ENCODE measurements at regions of chr12 and their contacts with region 1.

Region 1: DNA sequence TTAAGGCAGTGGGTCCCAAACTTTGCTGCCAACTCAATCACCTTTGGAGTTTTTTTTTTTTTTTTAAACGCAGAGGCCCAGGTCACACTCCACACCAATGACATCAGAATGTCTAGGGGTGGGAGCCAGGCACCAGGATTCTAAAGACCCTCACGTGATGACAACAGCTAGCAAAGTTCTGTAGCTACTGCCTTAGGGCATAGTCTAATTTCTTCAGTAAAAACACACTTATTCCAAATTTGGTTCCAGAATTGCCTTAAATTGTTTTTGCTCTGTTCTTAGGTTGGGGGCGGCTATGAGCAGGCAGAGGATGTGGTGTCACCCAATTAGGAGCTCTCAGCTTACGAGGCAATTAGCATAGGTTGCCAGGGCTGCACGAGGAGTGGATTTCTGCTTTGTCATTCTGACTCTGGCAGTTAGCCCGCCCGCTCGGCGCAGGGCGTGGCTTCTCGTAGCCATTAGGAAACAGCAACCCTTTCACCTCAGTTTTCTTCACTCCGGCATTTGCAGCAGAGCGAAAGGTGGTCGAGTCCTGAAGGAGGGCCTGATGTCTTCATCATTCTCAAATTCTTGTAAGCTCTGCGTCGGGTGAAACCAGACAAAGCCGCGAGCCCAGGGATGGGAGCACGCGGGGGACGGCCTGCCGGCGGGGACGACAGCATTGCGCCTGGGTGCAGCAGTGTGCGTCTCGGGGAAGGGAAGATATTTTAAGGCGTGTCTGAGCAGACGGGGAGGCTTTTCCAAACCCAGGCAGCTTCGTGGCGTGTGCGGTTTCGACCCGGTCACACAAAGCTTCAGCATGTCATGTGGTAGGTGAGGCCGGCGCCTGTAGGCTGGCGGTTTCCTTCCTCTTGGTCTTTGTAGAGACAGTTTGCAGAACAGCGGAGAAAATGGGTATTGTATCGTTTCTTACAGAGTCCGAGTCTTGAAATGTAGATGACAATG is 16.7 kb upstream of the EID3 start:
- DNase-seq: peak; percentile 76
- ATAC-seq: peak; percentile 86
- H3K4me3 Mint-ChIP-seq: peak overlapping the region; percentile 100
- H3K27ac Mint-ChIP-seq: peak overlapping the region; percentile 99
- H3K4me1 Mint-ChIP-seq: peaks cover 40% of the 10 kb centered on the region
- H3K27me3 Mint-ChIP-seq: peaks cover 2% of the 10 kb centered on the region
- CTCF ChIP-seq: no peak

Region 2: DNA sequence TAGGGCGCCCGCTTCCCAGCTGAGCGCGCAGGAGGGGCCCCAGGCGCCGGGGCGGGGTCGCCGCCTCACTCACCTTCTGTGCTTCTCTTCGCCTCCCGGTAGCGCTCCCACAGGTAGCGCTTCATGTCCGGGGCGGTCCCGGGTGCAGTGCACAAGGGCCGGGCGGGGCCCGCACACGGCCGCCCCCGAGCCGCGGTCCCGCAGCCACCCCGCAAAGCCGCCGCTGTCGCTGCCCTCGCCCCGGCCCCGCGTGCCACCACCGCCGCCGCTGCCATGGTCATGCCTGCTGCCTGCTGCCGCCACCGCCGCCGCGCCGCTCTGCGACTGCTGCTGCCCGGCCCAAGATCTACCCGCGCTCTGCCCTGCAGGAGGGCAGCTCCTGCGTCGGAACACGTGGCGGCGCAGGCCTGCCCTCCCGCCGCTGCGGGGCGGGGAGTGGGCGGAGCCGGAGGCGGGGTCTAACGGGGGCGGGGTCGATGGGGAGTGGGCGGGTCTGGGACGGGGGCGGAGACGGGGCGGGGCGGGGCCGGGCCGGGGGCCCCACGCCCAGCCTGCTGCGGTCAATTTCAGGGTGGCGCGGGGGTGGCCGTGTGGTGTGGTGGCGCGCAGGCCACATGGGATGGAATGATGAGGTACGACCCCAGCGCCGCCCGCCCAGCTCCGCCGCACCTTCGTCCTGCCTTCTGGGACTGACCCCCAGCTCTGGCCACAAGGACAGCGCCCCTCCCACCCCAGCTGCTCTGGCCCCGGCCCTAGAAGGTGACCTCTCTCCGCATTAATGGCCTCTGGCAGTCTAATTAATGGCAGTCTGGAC is 445.7 kb before region 1 on chr12 and contains the start of gene NT5DC3:
- CTCF ChIA-PET with region 1: no interaction called
- POLR2A ChIA-PET with region 1: no interaction called
- intact Hi-C with region 1: loop called (anchors 1 kb)
- DNase-seq: peak; percentile 83
- ATAC-seq: peak; percentile 91
- H3K4me3 Mint-ChIP-seq: peak within 1 kb of the TSS; percentile 89
- H3K27ac Mint-ChIP-seq: peak within 1 kb of the TSS; percentile 84
- H3K4me1 Mint-ChIP-seq: peaks cover 32% of the 10 kb centered on the region
- H3K27me3 Mint-ChIP-seq: no peaks in the 10 kb centered on the region
- CTCF ChIP-seq: no peak
- total RNA-seq, gene NT5DC3: 11.6 and 12.4 TPM in 2 replicates

Region 3: GRCh38 chr12:104215638-104216297 is 71.0 kb before region 1 on chr12 and contains the start of gene TXNRD1:
- CTCF ChIA-PET with region 1: interaction called, 17 read pairs
- POLR2A ChIA-PET with region 1: interaction called, 51 read pairs
- intact Hi-C with region 1: loop called (anchors 1 kb)
- DNase-seq: peak; percentile 82
- ATAC-seq: peak; percentile 93
- H3K4me3 Mint-ChIP-seq: peak within 1 kb of the TSS; percentile 79
- H3K27ac Mint-ChIP-seq: peak within 1 kb of the TSS; percentile 65
- H3K4me1 Mint-ChIP-seq: peaks cover 21% of the 10 kb centered on the region
- H3K27me3 Mint-ChIP-seq: peaks cover 6% of the 10 kb centered on the region
- CTCF ChIP-seq: no peak
- total RNA-seq, gene TXNRD1: 72.0 and 77.3 TPM in 2 replicates

Region 4: DNA sequence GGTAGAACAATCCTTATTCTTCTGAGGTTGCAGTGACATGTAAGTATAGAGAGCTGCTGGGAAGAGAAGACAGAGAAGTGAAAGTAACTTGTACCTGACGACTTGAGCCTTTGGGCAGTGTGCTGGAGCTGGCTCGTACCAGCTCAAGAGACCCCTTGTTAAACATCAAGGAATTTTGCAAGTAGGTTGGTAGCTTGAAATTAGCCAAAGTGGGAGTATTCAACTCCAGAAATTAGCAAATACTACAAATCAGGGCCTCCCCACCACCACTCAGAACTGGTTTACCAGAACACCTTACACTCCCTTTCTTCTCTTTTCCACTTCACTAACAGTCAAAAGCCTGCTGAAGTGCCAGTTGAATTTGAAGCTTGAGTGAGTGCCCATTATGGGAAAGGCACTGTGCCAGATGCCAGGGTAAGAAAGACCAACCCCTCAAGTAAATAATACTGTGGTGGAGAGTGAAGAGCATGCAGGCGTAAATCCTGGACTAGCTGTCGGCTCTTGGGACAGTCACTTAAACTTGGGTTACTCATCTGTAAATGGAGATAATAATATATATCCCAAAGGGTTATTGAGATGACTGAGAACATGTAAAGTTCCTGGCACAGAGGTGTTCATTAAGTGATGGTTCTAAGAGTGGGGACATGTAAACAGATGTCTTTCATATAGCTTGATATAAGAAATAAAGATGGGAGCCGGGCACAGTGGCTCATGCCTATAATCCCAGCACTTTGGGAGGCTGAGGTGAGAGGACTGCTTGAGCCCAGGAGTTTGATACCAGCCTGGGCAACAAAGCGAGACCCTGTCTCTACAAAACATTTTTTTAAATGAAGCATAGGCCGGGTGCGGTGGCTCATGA is 10.3 kb before region 1 on chr12:
- CTCF ChIA-PET with region 1: interaction called, 6 read pairs
- POLR2A ChIA-PET with region 1: interaction called, 43 read pairs
- intact Hi-C with region 1: loop called (anchors 1 kb)
- DNase-seq: no peak
- ATAC-seq: peak; percentile 79
- H3K4me3 Mint-ChIP-seq: peak overlapping the region; percentile 85
- H3K27ac Mint-ChIP-seq: peak overlapping the region; percentile 70
- H3K4me1 Mint-ChIP-seq: peaks cover 13% of the 10 kb centered on the region
- H3K27me3 Mint-ChIP-seq: peaks cover 3% of the 10 kb centered on the region
- CTCF ChIP-seq: no peak

Region 5: DNA sequence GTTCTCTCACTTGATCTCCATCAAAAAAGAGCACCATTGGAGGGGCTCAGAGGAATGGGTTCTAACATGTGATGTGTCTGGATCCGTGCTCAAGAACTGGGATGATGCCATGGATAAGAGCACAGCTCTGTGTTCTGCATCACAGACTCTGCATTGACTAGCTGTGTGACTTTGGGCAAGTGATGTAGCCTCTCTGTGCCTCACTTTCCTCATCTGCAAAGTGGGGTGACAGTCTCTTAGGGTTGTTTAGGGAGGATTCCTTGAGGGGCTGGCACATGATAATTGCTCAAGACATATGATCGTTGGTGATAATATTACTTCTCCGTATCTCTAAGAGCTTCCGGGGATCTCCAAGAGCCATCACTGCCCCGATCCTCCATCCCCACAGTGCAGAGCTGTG is 372.2 kb after region 1 on chr12:
- CTCF ChIA-PET with region 1: no interaction called
- POLR2A ChIA-PET with region 1: no interaction called
- intact Hi-C with region 1: no loop called
- DNase-seq: no peak
- ATAC-seq: no peak
- H3K4me3 Mint-ChIP-seq: no peak overlapping the region
- H3K27ac Mint-ChIP-seq: no peak overlapping the region
- H3K4me1 Mint-ChIP-seq: peaks cover 14% of the 10 kb centered on the region
- H3K27me3 Mint-ChIP-seq: no peaks in the 10 kb centered on the region
- CTCF ChIP-seq: no peak

Region 6: GRCh38 chr12:104671407-104672098 is 384.7 kb after region 1 on chr12:
- CTCF ChIA-PET with region 1: no interaction called
- POLR2A ChIA-PET with region 1: no interaction called
- intact Hi-C with region 1: loop called (anchors 10 kb)
- DNase-seq: peak; percentile 53
- ATAC-seq: peak; percentile 82
- H3K4me3 Mint-ChIP-seq: peak overlapping the region; percentile 71
- H3K27ac Mint-ChIP-seq: peak overlapping the region; percentile 92
- H3K4me1 Mint-ChIP-seq: peaks cover 80% of the 10 kb centered on the region
- H3K27me3 Mint-ChIP-seq: no peaks in the 10 kb centered on the region
- CTCF ChIP-seq: no peak

Region 7: DNA sequence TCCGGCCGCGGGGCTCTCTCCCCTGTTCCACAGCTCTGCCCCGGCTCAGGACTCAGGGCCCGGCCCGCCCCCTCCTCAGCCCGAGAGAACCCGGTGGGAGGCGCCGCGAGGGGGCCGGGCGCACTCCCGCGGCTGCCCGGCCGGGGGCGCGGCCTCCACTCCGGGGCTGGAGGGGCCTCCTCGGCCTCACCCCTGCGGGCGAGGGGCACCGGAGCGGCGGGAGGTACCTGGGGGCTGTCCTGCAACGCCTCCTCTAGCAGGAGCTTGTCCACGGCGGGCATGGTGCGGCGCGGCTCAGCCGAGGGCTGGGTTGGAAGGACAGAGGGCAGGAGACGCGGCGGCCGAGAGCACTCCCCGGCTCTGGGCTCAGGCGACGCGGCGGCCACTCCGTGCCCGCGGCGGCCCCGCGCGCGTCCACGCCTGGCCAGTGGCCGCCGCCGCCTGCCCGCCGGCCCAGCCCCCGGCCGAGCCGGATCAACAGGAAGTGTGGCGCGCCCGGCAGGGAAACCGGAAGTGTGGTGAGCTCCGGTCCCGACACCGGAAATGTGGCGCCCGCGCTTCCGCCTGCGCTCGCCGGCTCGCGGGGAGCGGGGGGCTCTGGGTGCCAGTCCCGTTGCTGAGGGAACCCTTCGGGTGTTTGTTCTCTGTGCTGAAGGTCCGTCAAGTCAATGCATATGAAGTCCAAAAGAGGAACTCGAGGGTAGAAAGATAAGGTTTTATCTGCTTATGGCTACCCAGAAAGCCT is 949.1 kb after region 1 on chr12 and contains the start of gene APPL2:
- CTCF ChIA-PET with region 1: no interaction called
- POLR2A ChIA-PET with region 1: no interaction called
- intact Hi-C with region 1: loop called (anchors 5 kb)
- DNase-seq: peak; percentile 79
- ATAC-seq: peak; percentile 82
- H3K4me3 Mint-ChIP-seq: peak within 1 kb of the TSS; percentile 88
- H3K27ac Mint-ChIP-seq: peak within 1 kb of the TSS; percentile 91
- H3K4me1 Mint-ChIP-seq: peaks cover 39% of the 10 kb centered on the region
- H3K27me3 Mint-ChIP-seq: no peaks in the 10 kb centered on the region
- CTCF ChIP-seq: no peak
- total RNA-seq, gene APPL2: 22.0 and 30.7 TPM in 2 replicates

Measured in activated B cell treated with CpG ODN at 0.5 μM for 24 hours (primary cell).